Activated CD4-positive, alpha-beta T cell treated with anti-CD3 and anti-CD28 coated beads, Interleukin-2, amount 10 ng/mL, durations not matched to agents 7 days and 5 days (primary cell): ENCODE measurements at regions of chr11 and their contacts with region 1.

Region 1: DNA sequence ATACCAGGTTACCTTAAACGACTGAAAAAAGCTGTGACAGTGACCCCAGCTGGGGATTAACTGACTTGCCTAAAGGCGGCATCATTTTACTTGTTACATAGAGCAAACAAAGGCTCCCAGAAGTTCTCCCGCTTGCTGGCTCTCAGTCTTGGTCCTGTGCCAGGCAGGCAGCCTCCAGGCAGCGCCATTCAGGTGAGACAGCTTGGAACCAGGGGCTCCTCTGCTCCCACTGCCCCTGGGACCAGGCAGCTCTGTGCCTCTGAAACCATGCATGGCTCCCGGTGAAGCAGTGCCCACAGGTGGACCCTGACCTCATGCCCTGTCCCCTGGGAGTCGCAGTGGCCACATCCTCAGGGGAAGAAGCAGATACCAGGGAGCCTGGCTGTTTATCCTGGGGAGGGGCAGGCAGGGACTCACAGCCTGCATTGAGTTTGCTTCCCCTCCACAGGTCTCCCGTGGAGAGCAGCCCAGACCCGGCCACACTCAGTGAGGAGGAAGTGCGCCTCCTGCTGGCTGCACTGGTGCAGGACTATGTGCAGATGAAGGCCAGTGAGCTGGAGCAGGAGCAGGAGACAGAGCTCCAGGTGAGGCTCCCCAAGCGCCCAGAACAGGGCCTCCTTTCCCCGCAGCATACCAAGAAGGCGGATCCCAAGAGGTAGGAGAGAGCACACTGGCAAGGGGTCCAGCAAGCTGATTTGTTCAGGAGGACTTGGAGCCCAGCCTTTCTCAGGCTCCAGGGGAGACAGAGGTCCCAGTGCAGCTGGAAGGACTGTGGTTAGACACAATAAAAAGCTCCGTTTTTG is 15.6 kb upstream of the CYP2R1 start:
- DNase-seq: peak; percentile 88
- H3K4me3 Mint-ChIP-seq: no peak overlapping the region
- H3K27ac Mint-ChIP-seq: no peak overlapping the region
- H3K4me1 Mint-ChIP-seq: peaks cover 50% of the 10 kb centered on the region
- H3K27me3 Mint-ChIP-seq: no peaks in the 10 kb centered on the region

Region 2: GRCh38 chr11:14519917-14520746 is 387.5 kb before region 1 on chr11 and contains the start of gene PSMA1:
- CTCF ChIA-PET with region 1: interaction called, 10 read pairs
- POLR2A ChIA-PET with region 1: interaction called, 5 read pairs
- DNase-seq: peak; percentile 95
- H3K4me3 Mint-ChIP-seq: peak within 1 kb of the TSS; percentile 97
- H3K27ac Mint-ChIP-seq: peak within 1 kb of the TSS; percentile 96
- H3K4me1 Mint-ChIP-seq: peaks cover 32% of the 10 kb centered on the region
- H3K27me3 Mint-ChIP-seq: no peaks in the 10 kb centered on the region
- total RNA-seq, gene PSMA1: 183 to 195 TPM

Region 3: DNA sequence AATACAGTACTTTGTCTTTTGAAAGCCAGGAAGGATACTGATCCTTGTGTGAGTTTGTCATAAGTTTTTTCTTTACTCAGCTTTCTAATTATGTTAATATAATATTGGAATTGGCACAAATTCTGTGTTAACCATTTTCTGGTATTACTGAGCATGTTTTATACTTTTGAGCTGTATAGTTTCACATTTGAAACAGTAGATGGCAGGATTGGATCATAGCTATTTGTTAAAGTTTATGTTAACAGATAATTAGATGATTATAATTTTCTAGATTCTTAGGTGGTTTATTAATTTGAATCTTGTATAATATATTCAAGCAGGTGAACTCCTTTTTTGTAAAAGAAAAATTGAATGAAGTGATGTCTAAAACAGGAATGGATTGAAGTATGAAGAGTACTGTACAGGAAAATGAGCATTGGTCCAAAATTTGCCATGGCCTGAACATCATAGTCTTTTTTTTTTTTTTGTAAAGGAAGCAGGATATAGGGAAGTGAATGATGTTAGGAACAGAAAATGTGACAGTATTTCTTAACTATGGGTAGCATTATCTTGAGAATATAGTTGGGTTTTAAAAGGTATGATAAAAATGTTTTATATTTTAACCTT is 117.6 kb before region 1 on chr11:
- CTCF ChIA-PET with region 1: interaction called, 19 read pairs
- POLR2A ChIA-PET with region 1: no interaction called
- DNase-seq: no peak
- H3K4me3 Mint-ChIP-seq: no peak overlapping the region
- H3K27ac Mint-ChIP-seq: no peak overlapping the region
- H3K4me1 Mint-ChIP-seq: peaks cover 14% of the 10 kb centered on the region
- H3K27me3 Mint-ChIP-seq: no peaks in the 10 kb centered on the region

Region 4: DNA sequence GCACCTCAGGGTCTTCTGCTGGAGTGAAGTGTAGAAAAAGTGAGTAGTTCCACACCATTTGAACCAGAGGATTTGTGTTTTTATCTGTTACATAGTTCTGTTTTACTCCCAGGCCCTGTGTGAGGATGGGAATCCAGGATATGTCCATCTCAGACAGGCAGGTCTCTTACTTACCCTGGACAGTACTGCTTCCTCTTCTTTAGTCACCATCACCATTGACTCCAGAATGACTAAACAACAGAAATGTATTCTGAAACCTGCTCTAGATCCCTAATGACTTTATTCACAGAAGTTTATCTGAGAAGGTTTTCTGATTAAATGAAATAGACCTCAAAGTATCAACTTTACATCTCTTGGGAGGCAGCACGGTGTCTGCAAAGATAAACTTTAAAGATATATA is 49.2 kb before region 1 on chr11:
- CTCF ChIA-PET with region 1: no interaction called
- POLR2A ChIA-PET with region 1: no interaction called
- DNase-seq: no peak
- H3K4me3 Mint-ChIP-seq: no peak overlapping the region
- H3K27ac Mint-ChIP-seq: no peak overlapping the region
- H3K4me1 Mint-ChIP-seq: peaks cover 3% of the 10 kb centered on the region
- H3K27me3 Mint-ChIP-seq: no peaks in the 10 kb centered on the region

Region 5: DNA sequence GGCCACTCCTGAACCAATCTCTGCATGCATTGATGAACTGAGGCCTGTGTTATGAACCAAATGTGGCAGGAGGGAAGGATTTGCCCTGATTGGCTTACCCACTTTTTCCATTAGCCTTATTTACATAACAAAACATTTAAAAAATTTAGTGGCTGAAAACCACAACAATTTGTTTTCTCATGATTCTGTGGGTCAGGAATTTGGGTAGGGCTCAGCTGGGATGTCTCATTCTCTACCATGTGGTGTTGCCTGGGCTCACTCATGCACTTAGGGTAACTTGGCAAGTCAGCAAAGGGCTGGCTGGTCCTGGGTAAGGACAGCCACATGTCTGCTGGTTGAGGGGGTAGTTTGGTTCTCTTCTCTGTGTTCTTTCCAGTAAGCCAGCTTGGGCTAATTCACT is 19.5 kb after region 1 on chr11:
- CTCF ChIA-PET with region 1: interaction called, 30 read pairs
- POLR2A ChIA-PET with region 1: no interaction called
- DNase-seq: no peak
- H3K4me3 Mint-ChIP-seq: no peak overlapping the region
- H3K27ac Mint-ChIP-seq: no peak overlapping the region
- H3K4me1 Mint-ChIP-seq: no peaks in the 10 kb centered on the region
- H3K27me3 Mint-ChIP-seq: no peaks in the 10 kb centered on the region

Region 6: GRCh38 chr11:15074206-15075161 is 166.9 kb after region 1 on chr11:
- CTCF ChIA-PET with region 1: interaction called, 33 read pairs
- POLR2A ChIA-PET with region 1: no interaction called
- DNase-seq: peak; percentile 87
- H3K4me3 Mint-ChIP-seq: peak overlapping the region; percentile 72
- H3K27ac Mint-ChIP-seq: peak overlapping the region; percentile 55
- H3K4me1 Mint-ChIP-seq: peaks cover 19% of the 10 kb centered on the region
- H3K27me3 Mint-ChIP-seq: peaks cover 18% of the 10 kb centered on the region